Right ventricle myocardium inferior (tissue), 1 donor: ENCODE measurements at regions of chr17 and their contacts with region 1.

Region 1: DNA sequence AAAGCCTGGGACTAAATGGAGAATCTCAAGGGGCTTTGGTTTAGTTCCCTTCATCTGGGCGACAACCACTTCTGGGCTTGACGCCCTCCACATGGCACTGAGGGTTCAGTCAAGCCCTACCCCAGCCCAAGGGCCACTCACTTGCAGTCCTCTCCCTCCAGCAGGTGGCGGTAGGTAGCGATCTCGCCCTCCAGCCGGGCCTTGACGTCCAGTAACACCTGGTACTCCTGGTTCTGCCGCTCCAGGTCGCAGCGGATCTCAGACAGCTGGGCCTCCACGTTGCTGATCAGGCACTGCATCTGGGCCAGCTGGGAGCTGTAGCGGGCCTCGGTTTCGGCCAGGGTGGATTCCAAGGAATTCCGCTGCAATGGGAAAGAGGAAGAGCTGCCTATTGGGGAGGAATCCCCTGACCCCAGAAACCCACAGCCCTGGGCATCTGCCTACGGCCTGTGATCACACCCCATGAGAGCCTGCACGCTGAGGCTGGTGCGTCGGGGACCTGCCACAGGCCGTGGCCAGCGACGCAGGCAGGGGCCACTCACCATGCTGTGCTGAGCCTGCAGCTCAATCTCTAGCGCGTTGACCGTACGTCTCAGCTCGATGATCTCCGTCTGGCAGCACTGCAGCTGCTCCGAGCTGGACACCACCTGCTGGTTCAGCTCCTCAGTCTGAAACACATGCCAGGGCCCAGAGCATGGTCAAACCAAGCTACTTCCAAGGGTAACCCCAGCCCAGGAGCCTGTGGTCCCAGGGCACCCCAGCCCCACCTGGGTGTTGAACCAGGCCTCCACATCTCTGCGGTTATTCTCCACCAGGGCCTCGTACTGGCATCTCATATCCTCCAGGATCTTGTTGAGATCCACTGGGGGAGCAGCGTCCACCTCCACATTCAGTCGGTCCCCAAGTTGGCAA is 2.6 kb downstream of the KRT36 start:
- DNase-seq: peak; percentile 81
- ATAC-seq: no peak

Region 2: DNA sequence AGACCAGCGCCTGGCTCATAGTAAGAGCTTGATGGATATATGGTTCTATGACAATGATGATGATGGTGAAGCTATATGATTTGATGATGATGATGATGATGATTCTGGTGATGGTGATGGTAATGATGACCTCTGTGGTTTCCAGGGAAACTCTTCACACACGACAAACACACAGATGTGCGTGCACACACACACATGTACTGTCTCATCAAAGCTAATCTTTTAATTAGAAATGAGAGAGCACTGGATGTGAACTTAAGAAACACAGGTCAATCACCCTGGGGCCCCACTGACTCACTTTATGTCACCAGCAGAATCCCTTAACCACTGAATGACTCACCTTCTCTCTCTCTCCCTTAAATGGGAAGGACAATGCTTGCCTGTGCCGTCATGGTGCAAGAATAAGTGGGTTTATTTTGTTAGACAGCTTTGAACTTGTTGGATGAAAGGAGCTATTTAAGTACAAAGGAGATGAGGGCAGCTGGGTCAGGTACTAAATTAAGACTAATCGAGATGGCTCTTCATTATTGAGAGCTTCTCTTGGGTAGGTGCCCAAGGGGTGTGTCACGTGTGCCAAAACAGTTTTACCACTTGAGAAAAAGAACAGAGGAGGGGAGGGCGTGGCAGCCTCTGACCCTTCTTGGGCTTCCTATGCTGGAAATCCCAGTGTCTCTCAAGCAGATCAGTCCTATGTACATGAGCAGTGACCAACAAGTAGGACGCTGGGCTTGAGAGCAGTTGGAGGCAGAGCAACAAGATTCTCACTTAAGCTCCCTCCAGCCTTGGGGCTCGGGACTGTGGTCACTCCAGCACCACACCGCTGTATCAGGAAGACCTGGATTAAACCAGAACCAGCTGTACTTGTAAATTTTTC is 83.0 kb before region 1 on chr17:
- intact Hi-C with region 1: loop called (anchors 10 kb)
- DNase-seq: no peak
- ATAC-seq: no peak

Region 3: GRCh38 chr17:41538565-41538991 is 51.5 kb after region 1 on chr17:
- intact Hi-C with region 1: no loop called
- DNase-seq: no peak
- ATAC-seq: no peak